ENCODE measurements at regions of chr4 and their contacts with region 1.

Region 1: GRCh38 chr4:74623041-74623440 is 171.3 kb downstream of the BTC start:
- DNase-seq: peak; percentile 52
- H3K4me3 ChIP-seq: no peak overlapping the region
- H3K27ac ChIP-seq: peak overlapping the region; percentile 91
- H3K4me1 ChIP-seq: peaks cover 75% of the 10 kb centered on the region
- H3K27me3 ChIP-seq: no peaks in the 10 kb centered on the region
- CTCF ChIP-seq: peak; percentile 50 to 64

Region 2: GRCh38 chr4:74418063-74418670 is 204.9 kb before region 1 on chr4:
- CTCF ChIA-PET with region 1: no interaction called
- dilution Hi-C with region 1: no loop called
- in situ Hi-C with region 1: no loop called
- intact Hi-C with region 1: no loop called
- DNase-seq: peak; percentile 94
- H3K4me3 ChIP-seq: no peak overlapping the region
- H3K27ac ChIP-seq: peak overlapping the region; percentile 99
- H3K4me1 ChIP-seq: peaks cover 55% of the 10 kb centered on the region
- H3K27me3 ChIP-seq: no peaks in the 10 kb centered on the region
- CTCF ChIP-seq: no peak

Region 3: DNA sequence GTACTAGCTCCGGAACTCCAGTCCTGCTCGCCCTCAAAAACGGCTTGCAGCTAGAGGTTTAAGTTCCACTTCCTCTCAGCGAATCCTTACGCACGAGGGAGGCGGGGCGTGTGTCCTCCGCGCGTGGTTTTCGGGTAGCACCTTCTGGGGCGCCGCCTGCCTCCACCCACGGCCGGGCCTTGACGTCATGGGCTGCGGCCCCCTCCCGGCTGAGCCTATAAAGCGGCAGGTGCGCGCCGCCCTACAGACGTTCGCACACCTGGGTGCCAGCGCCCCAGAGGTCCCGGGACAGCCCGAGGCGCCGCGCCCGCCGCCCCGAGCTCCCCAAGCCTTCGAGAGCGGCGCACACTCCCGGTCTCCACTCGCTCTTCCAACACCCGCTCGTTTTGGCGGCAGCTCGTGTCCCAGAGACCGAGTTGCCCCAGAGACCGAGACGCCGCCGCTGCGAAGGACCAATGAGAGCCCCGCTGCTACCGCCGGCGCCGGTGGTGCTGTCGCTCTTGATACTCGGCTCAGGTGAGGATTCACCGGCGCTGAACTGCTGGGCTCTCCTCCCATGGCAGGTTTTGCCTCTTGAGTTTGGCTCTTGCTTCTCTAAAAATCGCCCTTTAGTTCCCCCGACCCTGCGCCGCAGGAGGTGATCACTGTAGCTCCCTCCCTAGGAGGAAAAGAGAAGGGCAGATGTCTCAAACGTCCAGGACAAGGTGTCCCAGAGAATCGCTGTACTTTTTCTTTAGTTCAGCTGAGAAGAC is 178.0 kb before region 1 on chr4 and contains the start of gene AREG:
- CTCF ChIA-PET with region 1: no interaction called
- dilution Hi-C with region 1: no loop called
- in situ Hi-C with region 1: no loop called
- intact Hi-C with region 1: no loop called
- DNase-seq: peak; percentile 92
- H3K4me3 ChIP-seq: peak within 1 kb of the TSS; percentile 83 to 93 (median 93)
- H3K27ac ChIP-seq: peak within 1 kb of the TSS; percentile 99
- H3K4me1 ChIP-seq: peaks cover 34% of the 10 kb centered on the region
- H3K27me3 ChIP-seq: no peaks in the 10 kb centered on the region
- CTCF ChIP-seq: peak; percentile 24 to 63
- total RNA-seq, gene AREG: 540 to 2,145 TPM

Region 4: GRCh38 chr4:74456849-74457395 is 166.1 kb before region 1 on chr4:
- CTCF ChIA-PET with region 1: no interaction called
- dilution Hi-C with region 1: no loop called
- in situ Hi-C with region 1: no loop called
- intact Hi-C with region 1: loop called (anchors 1 kb)
- DNase-seq: peak; percentile 71
- H3K4me3 ChIP-seq: no peak overlapping the region
- H3K27ac ChIP-seq: peak overlapping the region; percentile 8
- H3K4me1 ChIP-seq: peaks cover 6% of the 10 kb centered on the region
- H3K27me3 ChIP-seq: no peaks in the 10 kb centered on the region
- CTCF ChIP-seq: no peak

Region 5: DNA sequence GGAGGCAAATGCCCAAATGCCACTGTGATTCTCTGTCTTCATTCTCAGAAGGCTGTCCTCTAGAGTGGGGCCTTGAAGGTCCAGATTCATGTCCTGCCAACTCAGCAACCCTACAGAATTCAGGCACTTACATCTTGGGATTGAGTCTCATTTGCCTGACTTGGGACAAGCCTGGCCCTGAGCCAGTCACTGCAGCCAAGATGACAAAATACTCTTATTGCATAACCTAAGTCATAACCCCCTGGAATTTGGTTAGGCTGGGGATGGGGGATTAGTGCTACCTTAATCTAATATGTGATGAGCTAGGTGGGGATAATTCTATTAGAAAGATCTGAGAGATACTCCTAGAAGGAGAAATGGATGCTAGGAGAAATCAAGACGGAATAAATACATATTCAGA is 77.6 kb before region 1 on chr4:
- CTCF ChIA-PET with region 1: no interaction called
- dilution Hi-C with region 1: loop called (anchors 5 kb)
- in situ Hi-C with region 1: no loop called
- intact Hi-C with region 1: loop called (anchors 2 kb)
- DNase-seq: peak; percentile 51
- H3K4me3 ChIP-seq: no peak overlapping the region
- H3K27ac ChIP-seq: peak overlapping the region; percentile 94
- H3K4me1 ChIP-seq: peaks cover 51% of the 10 kb centered on the region
- H3K27me3 ChIP-seq: no peaks in the 10 kb centered on the region
- CTCF ChIP-seq: no peak

Region 6: DNA sequence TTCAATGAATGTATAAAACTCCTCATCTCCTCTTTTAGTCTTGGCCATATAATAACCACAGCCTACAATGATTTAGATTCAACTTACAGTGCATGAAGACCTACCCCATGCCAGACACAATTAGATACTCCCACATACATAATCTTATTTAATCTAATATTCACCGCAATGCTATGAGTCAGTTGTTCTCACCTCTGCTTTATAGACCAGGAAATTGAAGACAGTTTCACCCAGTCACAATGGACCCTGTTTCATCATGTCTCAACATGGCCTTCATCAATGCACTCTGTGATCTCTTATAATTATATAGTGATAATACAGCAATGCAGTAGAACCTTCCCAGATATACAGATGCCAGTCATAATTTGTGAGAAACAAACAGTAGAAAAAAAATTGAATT is 458.5 kb after region 1 on chr4:
- CTCF ChIA-PET with region 1: no interaction called
- dilution Hi-C with region 1: no loop called
- in situ Hi-C with region 1: no loop called
- intact Hi-C with region 1: no loop called
- DNase-seq: peak; percentile 3
- H3K4me3 ChIP-seq: no peak overlapping the region
- H3K27ac ChIP-seq: no peak overlapping the region
- H3K4me1 ChIP-seq: no peaks in the 10 kb centered on the region
- H3K27me3 ChIP-seq: no peaks in the 10 kb centered on the region
- CTCF ChIP-seq: no peak

Measured in mammary epithelial cell (primary cell).